ENCODE measurements at regions of chr6 and their contacts with region 1.

Region 1: DNA sequence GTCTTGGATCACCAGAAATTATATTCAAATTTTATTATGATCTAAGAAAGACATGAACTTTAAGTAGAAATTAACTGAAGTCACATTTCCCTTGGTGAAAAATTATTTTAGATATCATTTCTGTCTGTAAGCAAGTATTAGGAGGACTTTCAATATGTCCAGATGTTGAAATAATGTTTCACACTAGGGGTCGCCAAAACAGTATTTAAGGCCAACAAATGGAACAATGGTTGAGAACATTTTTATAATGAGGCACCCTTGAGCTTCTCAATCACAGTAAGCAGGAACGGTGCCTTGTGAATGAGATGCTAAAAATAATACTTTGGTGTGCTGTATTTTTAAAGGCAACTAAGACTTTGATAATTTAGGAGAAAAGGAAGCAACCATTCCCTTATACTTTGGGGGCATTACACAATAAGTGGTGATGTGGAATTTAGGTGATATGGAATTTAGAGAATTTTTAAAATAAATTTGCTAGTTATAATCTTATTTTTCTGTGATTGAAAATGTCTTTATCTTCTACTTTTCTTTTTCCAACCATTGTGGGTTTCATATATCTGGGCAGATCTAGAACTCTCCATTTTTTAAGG is 9.6 kb upstream of the SF3B5 start:
- DNase-seq: peak; percentile 84
- H3K4me3 ChIP-seq: no peak overlapping the region
- H3K27ac ChIP-seq: no peak overlapping the region
- H3K4me1 ChIP-seq: no peaks in the 10 kb centered on the region
- H3K27me3 ChIP-seq: peaks cover 0 to 3% of the 10 kb centered on the region in 2 experiments
- CTCF ChIP-seq: peak; percentile 40 to 45
- POLR2A ChIP-seq: no peak

Region 2: GRCh38 chr6:143912671-143913070 is 192.3 kb before region 1 on chr6:
- CTCF ChIA-PET with region 1: no interaction called
- POLR2A ChIA-PET with region 1: no interaction called
- dilution Hi-C with region 1: no loop called
- intact Hi-C with region 1: no loop called
- DNase-seq: no peak
- H3K4me3 ChIP-seq: no peak overlapping the region
- H3K27ac ChIP-seq: no peak overlapping the region
- H3K4me1 ChIP-seq: no peaks in the 10 kb centered on the region
- H3K27me3 ChIP-seq: peaks cover 2 to 5% of the 10 kb centered on the region in 2 experiments
- CTCF ChIP-seq: no peak
- POLR2A ChIP-seq: no peak

Region 3: DNA sequence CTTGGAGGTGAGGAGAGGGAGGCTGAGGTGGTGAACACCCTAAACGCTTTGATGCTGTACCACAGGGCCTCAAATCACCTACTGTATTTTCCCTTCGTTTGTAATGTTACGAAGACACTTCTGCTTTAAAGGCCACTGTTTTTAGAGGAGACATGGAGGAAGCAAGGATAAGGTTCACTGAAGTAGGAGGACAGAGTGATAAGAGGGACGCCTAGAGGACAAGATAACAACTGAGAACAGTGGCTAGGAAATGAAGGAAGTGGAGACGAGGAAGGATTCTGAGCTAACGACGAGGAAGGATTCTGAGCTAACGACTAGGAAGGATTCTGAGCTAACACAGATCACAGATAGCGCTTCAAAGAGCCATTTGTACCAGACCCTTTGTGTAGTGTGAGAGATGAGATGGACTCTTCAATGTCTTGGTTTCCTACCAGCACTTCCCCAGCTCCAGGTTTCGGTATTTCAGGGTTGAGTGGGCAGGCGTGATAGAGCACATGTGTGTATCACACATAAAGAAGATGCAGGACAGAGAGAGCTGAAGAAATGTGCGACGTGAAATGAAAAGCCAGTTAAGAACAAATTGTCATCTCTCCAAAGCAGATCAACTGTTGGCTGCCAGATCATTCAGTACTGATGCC is 17.1 kb before region 1 on chr6:
- CTCF ChIA-PET with region 1: no interaction called
- POLR2A ChIA-PET with region 1: no interaction called
- dilution Hi-C with region 1: no loop called
- intact Hi-C with region 1: no loop called
- DNase-seq: no peak
- H3K4me3 ChIP-seq: no peak overlapping the region
- H3K27ac ChIP-seq: no peak overlapping the region
- H3K4me1 ChIP-seq: no peaks in the 10 kb centered on the region
- H3K27me3 ChIP-seq: no peaks in the 10 kb centered on the region
- CTCF ChIP-seq: no peak
- POLR2A ChIP-seq: no peak

Region 4: DNA sequence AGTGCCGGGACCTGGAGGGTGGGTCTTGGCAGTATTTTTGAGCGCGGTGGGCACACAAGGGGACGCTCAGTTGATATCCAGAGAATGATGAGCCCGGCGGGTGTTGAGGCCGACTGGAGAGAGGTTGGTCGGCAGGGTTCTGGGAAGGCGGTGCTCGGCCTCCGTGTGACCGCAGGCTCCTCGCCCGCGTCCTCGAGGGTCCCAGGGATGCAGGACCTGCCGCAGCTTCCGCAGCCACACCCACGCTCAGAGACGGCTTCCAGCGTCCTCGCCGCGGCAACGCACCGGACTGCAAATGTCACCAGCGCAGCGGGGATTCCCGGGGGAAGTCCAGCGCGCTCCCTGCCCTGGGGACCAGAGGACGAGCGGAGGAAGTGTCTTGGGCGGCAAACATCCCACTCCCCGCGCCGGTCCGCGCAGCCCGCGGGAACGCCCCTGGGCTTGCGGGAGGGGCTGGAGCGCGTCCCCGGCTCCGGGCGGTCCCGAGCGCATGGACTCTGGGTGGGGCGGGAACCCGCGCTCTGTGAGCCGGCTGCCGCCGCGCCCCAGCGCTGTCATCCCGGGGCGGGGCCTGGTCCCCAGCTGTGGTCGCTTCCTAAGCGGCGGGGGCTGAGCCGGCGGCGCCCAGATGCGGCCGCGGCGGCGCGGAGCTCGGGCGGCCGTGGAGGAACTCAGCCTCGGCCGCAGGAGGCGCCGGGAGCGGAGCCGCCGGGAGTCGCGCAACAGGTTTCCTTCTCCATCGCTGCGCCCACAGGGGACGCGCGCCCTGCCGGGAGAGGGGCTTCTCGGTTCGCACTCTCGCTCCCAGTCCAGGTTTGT is 45.1 kb after region 1 on chr6 and contains the start of gene STX11:
- CTCF ChIA-PET with region 1: interaction called, 11 read pairs
- POLR2A ChIA-PET with region 1: interaction called, 4 read pairs
- dilution Hi-C with region 1: no loop called
- intact Hi-C with region 1: loop called (anchors 1 kb)
- DNase-seq: peak; percentile 53
- H3K4me3 ChIP-seq: peak within 1 kb of the TSS; percentile 41 to 69 (median 52)
- H3K27ac ChIP-seq: peak within 1 kb of the TSS; percentile 72
- H3K4me1 ChIP-seq: peaks cover 16% of the 10 kb centered on the region
- H3K27me3 ChIP-seq: no peaks in the 10 kb centered on the region
- CTCF ChIP-seq: peak in 1 of 2 donors; percentile 27
- POLR2A ChIP-seq: peak; percentile 75
- total RNA-seq, gene STX11: 4.7 and 6.0 TPM in 2 replicates

Region 5: GRCh38 chr6:144190593-144190992 is 85.6 kb after region 1 on chr6:
- CTCF ChIA-PET with region 1: interaction called, 10 read pairs
- POLR2A ChIA-PET with region 1: no interaction called
- dilution Hi-C with region 1: no loop called
- intact Hi-C with region 1: loop called (anchors 1 kb)
- DNase-seq: peak; percentile 95
- H3K4me3 ChIP-seq: no peak overlapping the region
- H3K27ac ChIP-seq: no peak overlapping the region
- H3K4me1 ChIP-seq: peaks cover 14% of the 10 kb centered on the region
- H3K27me3 ChIP-seq: no peaks in the 10 kb centered on the region
- CTCF ChIP-seq: peak in 1 of 2 donors; percentile 5
- POLR2A ChIP-seq: peak; percentile 57

Region 6: DNA sequence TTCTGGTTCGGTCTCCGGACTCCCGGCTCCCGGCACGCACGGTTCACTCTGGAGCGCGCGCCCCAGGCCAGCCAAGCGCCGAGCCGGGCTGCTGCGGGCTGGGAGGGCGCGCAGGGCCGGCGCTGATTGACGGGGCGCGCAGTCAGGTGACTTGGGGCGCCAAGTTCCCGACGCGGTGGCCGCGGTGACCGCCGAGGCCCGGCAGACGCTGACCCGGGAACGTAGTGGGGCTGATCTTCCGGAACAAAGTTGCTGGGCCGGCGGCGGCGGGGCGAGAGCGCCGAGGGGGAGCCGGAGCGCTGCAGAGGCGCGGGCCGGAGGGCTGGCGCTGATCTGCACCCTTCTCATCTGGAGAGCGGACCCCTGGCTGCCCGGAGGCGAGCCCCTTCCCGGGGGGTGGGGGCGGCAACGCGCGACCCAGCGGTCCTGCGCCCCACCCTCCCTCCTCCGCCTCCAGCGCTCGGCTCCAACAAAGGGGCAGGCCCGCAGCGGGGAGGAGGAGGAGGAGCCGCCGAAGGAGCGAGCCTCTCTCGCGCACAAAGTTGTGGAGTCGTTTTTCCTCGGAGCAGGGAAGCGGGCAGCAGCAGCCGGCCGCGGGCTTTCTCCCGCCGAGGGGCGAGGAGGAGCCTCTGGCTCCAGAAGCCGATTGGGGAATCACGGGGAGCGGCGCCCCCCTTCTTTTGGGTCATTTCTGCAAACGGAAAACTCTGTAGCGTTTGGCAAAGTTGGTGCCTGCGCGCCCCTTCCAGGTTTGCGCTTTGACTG is 180.0 kb after region 1 on chr6 and contains the start of gene UTRN:
- CTCF ChIA-PET with region 1: interaction called, 6 read pairs
- POLR2A ChIA-PET with region 1: no interaction called
- dilution Hi-C with region 1: no loop called
- intact Hi-C with region 1: loop called (anchors 1 kb)
- DNase-seq: peak; percentile 83
- H3K4me3 ChIP-seq: peak within 1 kb of the TSS; percentile 83 to 93 (median 88)
- H3K27ac ChIP-seq: peak within 1 kb of the TSS; percentile 89
- H3K4me1 ChIP-seq: peaks cover 14% of the 10 kb centered on the region
- H3K27me3 ChIP-seq: no peaks in the 10 kb centered on the region
- CTCF ChIP-seq: no peak
- POLR2A ChIP-seq: peak; percentile 73
- total RNA-seq, gene UTRN: 224 and 228 TPM in 2 replicates

Region 7: DNA sequence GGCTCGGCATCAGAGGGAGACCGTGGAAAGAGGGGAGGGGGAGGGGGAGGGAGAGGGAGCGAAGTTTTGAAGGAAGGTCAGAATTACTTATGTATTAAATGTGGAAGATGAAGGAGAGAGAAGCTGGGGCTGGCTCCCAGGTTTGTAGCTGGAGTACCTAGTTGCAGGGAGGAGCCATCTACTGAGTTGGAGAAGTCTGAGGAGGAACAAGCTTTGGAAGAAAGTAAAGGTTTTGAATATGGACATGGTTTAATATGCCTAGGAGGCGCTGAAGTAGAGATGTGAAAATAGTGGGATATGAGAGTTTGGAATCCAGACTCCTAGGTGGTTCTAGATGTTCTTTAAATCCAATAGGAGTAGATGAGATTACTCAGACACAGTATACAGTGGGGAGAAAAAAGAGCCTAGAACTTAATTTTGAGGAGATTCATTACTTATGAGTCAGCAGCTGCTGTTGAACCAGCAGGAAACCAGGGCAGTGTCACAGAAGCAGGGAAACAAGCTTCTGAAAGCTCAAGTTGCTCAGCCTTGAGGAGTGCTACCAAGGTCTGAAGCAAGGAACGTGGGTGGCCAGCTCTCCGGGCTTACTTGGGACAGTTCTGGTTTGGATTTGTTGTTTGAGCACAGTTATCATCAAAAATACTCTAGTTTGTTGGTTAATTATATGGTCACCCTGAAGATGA is 329.5 kb after region 1 on chr6:
- CTCF ChIA-PET with region 1: interaction called, 5 read pairs
- POLR2A ChIA-PET with region 1: no interaction called
- dilution Hi-C with region 1: no loop called
- intact Hi-C with region 1: loop called (anchors 1 kb)
- DNase-seq: peak; percentile 89
- H3K4me3 ChIP-seq: no peak overlapping the region
- H3K27ac ChIP-seq: peak overlapping the region; percentile 43
- H3K4me1 ChIP-seq: peaks cover 14% of the 10 kb centered on the region
- H3K27me3 ChIP-seq: no peaks in the 10 kb centered on the region
- CTCF ChIP-seq: no peak
- POLR2A ChIP-seq: no peak